Endothelial cell of umbilical vein (primary cell): ENCODE measurements at regions of chr3 and their contacts with region 1.

Region 1: GRCh38 chr3:159884661-159885402 is 103.8 kb upstream of the IL12A start:
- DNase-seq: peak; percentile 75
- H3K4me3 ChIP-seq: no peak overlapping the region
- H3K27ac ChIP-seq: peak overlapping the region; percentile 46
- H3K4me1 ChIP-seq: peaks cover 34% of the 10 kb centered on the region
- H3K27me3 ChIP-seq: no peaks in the 10 kb centered on the region
- CTCF ChIP-seq: peak; percentile 27 to 37
- POLR2A ChIP-seq: no peak

Region 2: GRCh38 chr3:159616212-159616825 is 268.5 kb before region 1 on chr3:
- CTCF ChIA-PET with region 1: no interaction called
- POLR2A ChIA-PET with region 1: no interaction called
- dilution Hi-C with region 1: no loop called
- intact Hi-C with region 1: loop called (anchors 2 kb)
- DNase-seq: peak; percentile 60
- H3K4me3 ChIP-seq: no peak overlapping the region
- H3K27ac ChIP-seq: no peak overlapping the region
- H3K4me1 ChIP-seq: peaks cover 18% of the 10 kb centered on the region
- H3K27me3 ChIP-seq: no peaks in the 10 kb centered on the region
- CTCF ChIP-seq: peak; percentile 38 to 64
- POLR2A ChIP-seq: no peak

Region 3: GRCh38 chr3:159852821-159853505 is 31.9 kb before region 1 on chr3:
- CTCF ChIA-PET with region 1: interaction called, 74 read pairs
- POLR2A ChIA-PET with region 1: interaction called, 25 read pairs
- dilution Hi-C with region 1: no loop called
- intact Hi-C with region 1: loop called (anchors 1 kb)
- DNase-seq: peak; percentile 97
- H3K4me3 ChIP-seq: peak overlapping the region in 2 of 3 experiments; percentile 45 to 52
- H3K27ac ChIP-seq: peak overlapping the region; percentile 97
- H3K4me1 ChIP-seq: peaks cover 70% of the 10 kb centered on the region
- H3K27me3 ChIP-seq: no peaks in the 10 kb centered on the region
- CTCF ChIP-seq: no peak
- POLR2A ChIP-seq: peak; percentile 2

Region 4: DNA sequence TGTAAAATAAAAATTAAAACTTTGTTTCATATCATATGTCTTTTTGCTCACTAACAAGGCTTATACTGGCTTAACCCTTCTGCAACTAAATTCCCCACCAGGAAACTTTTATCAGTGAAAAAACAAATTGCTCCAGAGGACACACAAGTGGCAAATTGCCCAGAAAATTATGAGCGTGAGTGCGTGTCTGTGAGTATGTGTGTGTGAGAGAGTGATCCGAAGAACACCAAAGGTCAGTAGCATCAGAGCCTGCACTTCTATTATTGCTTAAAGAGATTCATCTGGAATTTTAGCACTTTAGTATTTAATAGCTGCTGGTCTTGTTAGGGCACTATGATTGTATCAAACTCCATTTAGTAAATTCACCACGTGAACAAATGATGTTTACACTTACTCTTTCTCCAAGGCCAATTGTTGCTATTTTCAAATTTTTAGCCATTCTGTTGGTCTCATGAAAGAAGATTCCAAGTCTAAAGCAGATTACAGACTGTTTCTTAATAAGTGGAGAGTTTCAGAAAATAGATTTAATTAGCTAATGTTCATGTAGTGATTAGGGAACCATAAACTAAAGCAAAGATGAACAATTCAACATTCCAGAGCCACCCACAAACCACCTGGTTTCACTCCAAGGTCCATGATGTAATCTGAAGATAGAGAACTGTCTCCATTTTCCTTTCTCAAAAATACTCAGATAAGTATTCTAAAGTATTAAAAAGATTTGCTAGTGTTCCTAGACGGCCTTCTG is 12.7 kb after region 1 on chr3:
- CTCF ChIA-PET with region 1: interaction called, 34 read pairs
- POLR2A ChIA-PET with region 1: no interaction called
- dilution Hi-C with region 1: no loop called
- intact Hi-C with region 1: no loop called
- DNase-seq: peak; percentile 37
- H3K4me3 ChIP-seq: no peak overlapping the region
- H3K27ac ChIP-seq: no peak overlapping the region
- H3K4me1 ChIP-seq: no peaks in the 10 kb centered on the region
- H3K27me3 ChIP-seq: no peaks in the 10 kb centered on the region
- CTCF ChIP-seq: no peak
- POLR2A ChIP-seq: no peak

Region 5: GRCh38 chr3:159988617-159989271 is 103.9 kb after region 1 on chr3 and contains the start of gene IL12A:
- CTCF ChIA-PET with region 1: interaction called, 85 read pairs
- POLR2A ChIA-PET with region 1: no interaction called
- dilution Hi-C with region 1: no loop called
- intact Hi-C with region 1: loop called (anchors 5 kb)
- DNase-seq: peak; percentile 75
- H3K4me3 ChIP-seq: peak within 1 kb of the TSS; percentile 58 to 71 (median 60)
- H3K27ac ChIP-seq: no peak within 1 kb of the TSS
- H3K4me1 ChIP-seq: peaks cover 4% of the 10 kb centered on the region
- H3K27me3 ChIP-seq: no peaks in the 10 kb centered on the region
- CTCF ChIP-seq: peak; percentile 96 to 98
- POLR2A ChIP-seq: no peak
- total RNA-seq, gene IL12A: 1.5 and 1.7 TPM in 2 replicates

Region 6: GRCh38 chr3:160343132-160343531 is 458.3 kb after region 1 on chr3:
- CTCF ChIA-PET with region 1: interaction called, 6 read pairs
- POLR2A ChIA-PET with region 1: no interaction called
- dilution Hi-C with region 1: no loop called
- intact Hi-C with region 1: loop called (anchors 10 kb)
- DNase-seq: peak; percentile 23
- H3K4me3 ChIP-seq: no peak overlapping the region
- H3K27ac ChIP-seq: no peak overlapping the region
- H3K4me1 ChIP-seq: no peaks in the 10 kb centered on the region
- H3K27me3 ChIP-seq: no peaks in the 10 kb centered on the region
- CTCF ChIP-seq: peak in 1 of 2 donors; percentile 9
- POLR2A ChIP-seq: no peak